CD8-positive, alpha-beta T cell (primary cell): ENCODE measurements at regions of chr10 and their contacts with region 1.

Region 1: DNA sequence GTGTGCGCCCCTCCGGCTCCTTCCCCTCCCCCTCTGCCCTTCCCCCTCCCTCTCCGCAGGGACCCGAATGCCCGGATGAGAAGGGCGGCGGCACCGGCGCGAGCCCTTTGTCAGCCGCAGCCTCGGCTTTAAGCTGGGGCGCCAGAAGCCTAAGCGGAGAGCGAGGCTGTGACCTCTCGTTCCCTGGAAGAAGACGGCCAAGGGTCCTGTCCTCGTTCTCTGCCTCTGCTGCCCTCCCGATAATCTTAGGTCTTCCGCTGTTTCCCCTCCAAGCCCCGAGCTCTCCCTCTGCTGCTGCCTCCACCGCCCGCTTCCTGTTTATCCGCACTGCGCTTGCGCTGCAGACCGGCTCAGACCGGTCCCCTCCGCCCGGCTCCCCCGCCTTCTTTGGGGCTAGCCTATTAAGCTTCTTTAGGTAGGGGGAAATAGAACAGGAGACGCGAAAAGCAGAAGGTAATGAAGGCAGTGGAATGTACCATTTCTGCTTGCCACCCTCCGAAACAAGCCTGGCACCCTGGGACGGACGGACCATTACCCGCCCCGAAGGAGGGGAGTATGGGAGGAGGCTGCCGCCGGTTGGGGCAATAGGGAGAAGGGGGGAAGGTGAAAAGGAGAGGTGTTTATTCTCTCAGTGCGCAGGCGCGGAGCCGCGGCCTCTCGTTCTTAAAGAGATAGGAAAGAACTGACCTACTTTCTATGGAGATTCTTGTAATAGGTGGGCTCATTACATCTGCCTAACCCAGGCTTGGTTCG is at the start of gene OGA:
- DNase-seq: peak; percentile 94 to 100 (median 98)
- ATAC-seq: peak; percentile 90
- H3K4me3 ChIP-seq: peak within 1 kb of the TSS; percentile 78 to 82
- H3K4me3 Mint-ChIP-seq: peak within 1 kb of the TSS; percentile 98
- H3K27ac ChIP-seq: peak within 1 kb of the TSS; percentile 81 to 90
- H3K27ac Mint-ChIP-seq: peak within 1 kb of the TSS; percentile 97
- H3K4me1 ChIP-seq: peaks cover 32% of the 10 kb centered on the region
- H3K4me1 Mint-ChIP-seq: peaks cover 51% of the 10 kb centered on the region
- H3K27me3 ChIP-seq: no peaks in the 10 kb centered on the region
- H3K27me3 Mint-ChIP-seq: no peaks in the 10 kb centered on the region
- CTCF ChIP-seq: no peak
- total RNA-seq, gene OGA: 356 to 394 TPM

Region 2: GRCh38 chr10:101759309-101760247 is 58.7 kb before region 1 on chr10:
- CTCF ChIA-PET with region 1: no interaction called
- POLR2A ChIA-PET with region 1: no interaction called
- intact Hi-C with region 1: no loop called
- DNase-seq: no peak
- ATAC-seq: no peak
- H3K4me3 ChIP-seq: no peak overlapping the region
- H3K4me3 Mint-ChIP-seq: no peak overlapping the region
- H3K27ac ChIP-seq: no peak overlapping the region
- H3K27ac Mint-ChIP-seq: no peak overlapping the region
- H3K4me1 ChIP-seq: no peaks in the 10 kb centered on the region
- H3K4me1 Mint-ChIP-seq: no peaks in the 10 kb centered on the region
- H3K27me3 ChIP-seq: peaks cover 0 to 2% of the 10 kb centered on the region in 2 experiments
- H3K27me3 Mint-ChIP-seq: peaks cover 10% of the 10 kb centered on the region
- CTCF ChIP-seq: no peak

Region 3: DNA sequence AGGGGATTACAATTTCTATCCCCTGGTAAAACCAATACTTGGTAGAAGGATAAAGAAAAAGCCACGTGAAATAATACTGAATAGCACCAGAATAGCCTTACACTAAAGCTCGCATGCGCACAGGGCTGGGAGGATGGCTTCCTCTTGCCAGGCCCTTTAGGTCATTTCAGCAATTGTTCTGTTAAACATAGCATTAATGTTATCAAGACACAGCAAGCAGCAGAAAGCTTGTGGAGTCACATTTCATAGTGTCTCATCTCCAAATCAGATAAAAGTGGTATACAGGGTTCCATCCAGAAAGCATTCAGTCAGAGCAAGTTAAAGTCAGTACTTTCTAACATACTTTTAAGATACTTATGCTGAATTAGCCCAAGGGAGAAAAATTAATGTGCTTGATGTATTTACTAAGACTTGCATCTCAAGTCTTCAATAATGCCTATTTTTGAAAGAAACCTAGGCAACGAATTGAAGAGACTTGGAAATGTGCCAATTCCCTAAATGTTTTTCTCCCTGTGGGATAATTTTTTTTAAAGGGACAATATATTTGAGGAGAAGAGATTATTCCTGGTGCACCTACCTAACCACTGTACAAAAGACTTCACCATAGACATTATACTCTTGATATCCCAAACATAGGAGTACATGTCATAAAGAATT is 20.8 kb before region 1 on chr10:
- CTCF ChIA-PET with region 1: no interaction called
- POLR2A ChIA-PET with region 1: interaction called, 4 read pairs
- intact Hi-C with region 1: loop called (anchors 2 kb)
- DNase-seq: no peak
- ATAC-seq: no peak
- H3K4me3 ChIP-seq: no peak overlapping the region
- H3K4me3 Mint-ChIP-seq: no peak overlapping the region
- H3K27ac ChIP-seq: no peak overlapping the region
- H3K27ac Mint-ChIP-seq: peak overlapping the region; percentile 11
- H3K4me1 ChIP-seq: no peaks in the 10 kb centered on the region
- H3K4me1 Mint-ChIP-seq: peaks cover 38% of the 10 kb centered on the region
- H3K27me3 ChIP-seq: no peaks in the 10 kb centered on the region
- H3K27me3 Mint-ChIP-seq: no peaks in the 10 kb centered on the region
- CTCF ChIP-seq: no peak

Region 4: DNA sequence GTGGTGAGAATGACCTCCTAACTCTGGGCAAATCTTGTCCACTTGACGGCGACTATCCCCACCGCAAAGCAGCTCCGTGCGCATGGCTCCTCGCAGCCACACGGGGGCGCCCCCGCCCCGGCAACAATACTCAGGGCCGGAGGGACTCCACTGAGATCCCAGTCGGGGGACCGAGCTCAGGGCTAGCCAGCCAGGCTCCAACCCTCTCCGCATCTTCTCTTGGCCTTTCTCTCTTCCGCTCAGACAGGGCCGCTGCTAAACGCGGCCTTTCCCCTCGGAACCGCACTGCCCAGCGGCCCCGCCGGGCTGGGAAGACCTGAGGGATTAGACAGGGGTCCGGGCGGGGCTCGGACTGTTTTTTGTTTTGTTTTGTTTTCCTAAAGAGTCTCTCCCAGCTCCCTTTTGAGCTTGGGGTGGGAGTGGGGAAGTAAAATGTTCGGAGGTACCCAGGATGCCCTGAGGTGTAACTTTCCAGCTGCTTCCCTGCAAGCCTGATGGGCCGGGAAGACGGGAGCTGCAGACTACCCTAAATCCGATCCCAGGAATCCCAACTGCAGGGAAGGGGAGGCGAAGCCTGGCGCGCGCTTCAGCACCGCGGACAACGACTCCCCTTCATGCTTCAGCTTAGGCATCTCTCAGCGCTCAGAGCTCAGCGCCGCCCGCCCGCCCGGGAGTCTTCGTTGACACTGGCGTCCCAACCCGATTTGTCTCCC is 22.6 kb after region 1 on chr10:
- CTCF ChIA-PET with region 1: interaction called, 29 read pairs
- POLR2A ChIA-PET with region 1: interaction called, 19 read pairs
- intact Hi-C with region 1: loop called in 1 of 2 experiments (anchors 1 kb)
- DNase-seq: peak; percentile 39 to 82 (median 72)
- ATAC-seq: peak; percentile 44
- H3K4me3 ChIP-seq: peak overlapping the region; percentile 47 to 48
- H3K4me3 Mint-ChIP-seq: peak overlapping the region; percentile 84
- H3K27ac ChIP-seq: no peak overlapping the region
- H3K27ac Mint-ChIP-seq: no peak overlapping the region
- H3K4me1 ChIP-seq: peaks cover 38% of the 10 kb centered on the region
- H3K4me1 Mint-ChIP-seq: peaks cover 48% of the 10 kb centered on the region
- H3K27me3 ChIP-seq: no peaks in the 10 kb centered on the region
- H3K27me3 Mint-ChIP-seq: peaks cover 8% of the 10 kb centered on the region
- CTCF ChIP-seq: peak; percentile 84

Region 5: GRCh38 chr10:102055647-102056419 is 237.5 kb after region 1 on chr10 and contains the start of gene ARMH3:
- CTCF ChIA-PET with region 1: no interaction called
- POLR2A ChIA-PET with region 1: interaction called, 5 read pairs
- intact Hi-C with region 1: loop called (anchors 1 to 2 kb)
- DNase-seq: peak; percentile 75 to 95 (median 87)
- ATAC-seq: peak; percentile 93
- H3K4me3 ChIP-seq: peak within 1 kb of the TSS; percentile 93 to 94
- H3K4me3 Mint-ChIP-seq: peak within 1 kb of the TSS; percentile 97
- H3K27ac ChIP-seq: peak within 1 kb of the TSS; percentile 79 to 90
- H3K27ac Mint-ChIP-seq: peak within 1 kb of the TSS; percentile 95
- H3K4me1 ChIP-seq: peaks cover 40% of the 10 kb centered on the region
- H3K4me1 Mint-ChIP-seq: peaks cover 42% of the 10 kb centered on the region
- H3K27me3 ChIP-seq: no peaks in the 10 kb centered on the region
- H3K27me3 Mint-ChIP-seq: no peaks in the 10 kb centered on the region
- CTCF ChIP-seq: no peak
- total RNA-seq, gene ARMH3: 18.6 to 20.6 TPM

Region 6: GRCh38 chr10:102064868-102065560 is 246.7 kb after region 1 on chr10 and contains the start of gene HPS6:
- CTCF ChIA-PET with region 1: no interaction called
- POLR2A ChIA-PET with region 1: no interaction called
- intact Hi-C with region 1: loop called in 1 of 2 experiments (anchors 2 kb)
- DNase-seq: peak; percentile 69 to 94 (median 89)
- ATAC-seq: peak; percentile 98
- H3K4me3 ChIP-seq: peak within 1 kb of the TSS; percentile 57 to 97
- H3K4me3 Mint-ChIP-seq: peak within 1 kb of the TSS; percentile 87
- H3K27ac ChIP-seq: peak within 1 kb of the TSS; percentile 66 to 85
- H3K27ac Mint-ChIP-seq: peak within 1 kb of the TSS; percentile 93
- H3K4me1 ChIP-seq: peaks cover 21% of the 10 kb centered on the region
- H3K4me1 Mint-ChIP-seq: peaks cover 28% of the 10 kb centered on the region
- H3K27me3 ChIP-seq: no peaks in the 10 kb centered on the region
- H3K27me3 Mint-ChIP-seq: no peaks in the 10 kb centered on the region
- CTCF ChIP-seq: no peak
- total RNA-seq, gene HPS6: 17.5 to 18.1 TPM

Region 7: GRCh38 chr10:102114861-102115618 is 296.7 kb after region 1 on chr10:
- CTCF ChIA-PET with region 1: no interaction called
- POLR2A ChIA-PET with region 1: no interaction called
- intact Hi-C with region 1: loop called in 1 of 2 experiments (anchors 5 kb)
- DNase-seq: peak; percentile 62 to 90 (median 84)
- ATAC-seq: peak; percentile 69
- H3K4me3 ChIP-seq: peak overlapping the region; percentile 57 to 75
- H3K4me3 Mint-ChIP-seq: peak overlapping the region; percentile 91
- H3K27ac ChIP-seq: peak overlapping the region; percentile 56 to 97
- H3K27ac Mint-ChIP-seq: peak overlapping the region; percentile 93
- H3K4me1 ChIP-seq: peaks cover 63% of the 10 kb centered on the region
- H3K4me1 Mint-ChIP-seq: peaks cover 71% of the 10 kb centered on the region
- H3K27me3 ChIP-seq: no peaks in the 10 kb centered on the region
- H3K27me3 Mint-ChIP-seq: no peaks in the 10 kb centered on the region
- CTCF ChIP-seq: no peak

Region 8: GRCh38 chr10:102245101-102245931 is 427.0 kb after region 1 on chr10 and contains the start of gene GBF1:
- CTCF ChIA-PET with region 1: no interaction called
- POLR2A ChIA-PET with region 1: no interaction called
- intact Hi-C with region 1: loop called in 1 of 2 experiments (anchors 5 kb)
- DNase-seq: peak; percentile 75 to 98 (median 87)
- ATAC-seq: peak; percentile 84
- H3K4me3 ChIP-seq: peak within 1 kb of the TSS; percentile 82 to 95
- H3K4me3 Mint-ChIP-seq: peak within 1 kb of the TSS; percentile 94
- H3K27ac ChIP-seq: peak within 1 kb of the TSS; percentile 89 to 93
- H3K27ac Mint-ChIP-seq: peak within 1 kb of the TSS; percentile 92
- H3K4me1 ChIP-seq: peaks cover 44% of the 10 kb centered on the region
- H3K4me1 Mint-ChIP-seq: peaks cover 54% of the 10 kb centered on the region
- H3K27me3 ChIP-seq: peaks cover 10 to 22% of the 10 kb centered on the region in 2 experiments
- H3K27me3 Mint-ChIP-seq: peaks cover 19% of the 10 kb centered on the region
- CTCF ChIP-seq: no peak
- total RNA-seq, gene GBF1: 26.7 to 31.3 TPM